Naive thymus-derived CD8-positive, alpha-beta T cell (primary cell): ENCODE measurements at regions of chr14 and their contacts with region 1.

Region 1: DNA sequence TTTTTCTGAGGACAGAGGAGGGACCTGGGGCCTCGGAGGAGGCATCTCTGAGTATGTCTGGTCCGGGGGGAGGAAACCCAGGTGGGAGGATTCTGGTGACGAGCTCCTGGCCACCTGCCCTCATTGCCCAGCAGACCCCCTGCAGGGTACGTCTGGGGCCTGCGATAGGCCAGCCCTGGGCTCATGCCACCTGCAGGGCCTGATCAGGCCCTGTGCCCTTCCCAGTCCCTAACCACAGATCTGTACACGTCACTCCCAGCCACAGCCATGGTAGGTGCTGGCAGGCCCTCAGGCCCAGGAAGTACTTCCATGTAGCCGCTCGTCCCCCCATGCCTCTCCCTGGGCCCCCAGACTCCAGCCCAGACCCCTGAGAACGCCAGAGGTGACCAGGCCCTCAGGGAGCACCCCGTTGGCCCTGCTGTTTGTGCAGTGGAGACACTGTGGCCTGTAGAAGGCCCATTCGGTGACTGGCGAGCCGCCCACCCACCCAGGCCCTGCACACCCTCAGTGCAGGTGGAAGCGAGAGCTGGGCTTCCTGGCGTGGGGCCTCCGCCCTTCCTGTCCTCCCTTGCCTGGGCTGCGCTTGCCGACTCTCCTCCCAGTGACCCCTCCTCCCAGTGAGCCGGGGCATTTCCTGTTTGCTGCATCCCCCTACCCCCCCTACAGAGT is 5.7 kb downstream of the INF2 start:
- DNase-seq: peak in 9 of 10 donors; percentile 37 to 81 (median 54)
- ATAC-seq: peak; percentile 76 to 84
- H3K4me3 Mint-ChIP-seq: peak overlapping the region; percentile 46 to 85 (median 69)
- H3K27ac Mint-ChIP-seq: peak overlapping the region; percentile 93 to 98 (median 95)
- H3K4me1 Mint-ChIP-seq: peaks cover 19 to 50% (median 49%) of the 10 kb centered on the region in 4 donors
- H3K27me3 Mint-ChIP-seq: no peaks in the 10 kb centered on the region

Region 2: DNA sequence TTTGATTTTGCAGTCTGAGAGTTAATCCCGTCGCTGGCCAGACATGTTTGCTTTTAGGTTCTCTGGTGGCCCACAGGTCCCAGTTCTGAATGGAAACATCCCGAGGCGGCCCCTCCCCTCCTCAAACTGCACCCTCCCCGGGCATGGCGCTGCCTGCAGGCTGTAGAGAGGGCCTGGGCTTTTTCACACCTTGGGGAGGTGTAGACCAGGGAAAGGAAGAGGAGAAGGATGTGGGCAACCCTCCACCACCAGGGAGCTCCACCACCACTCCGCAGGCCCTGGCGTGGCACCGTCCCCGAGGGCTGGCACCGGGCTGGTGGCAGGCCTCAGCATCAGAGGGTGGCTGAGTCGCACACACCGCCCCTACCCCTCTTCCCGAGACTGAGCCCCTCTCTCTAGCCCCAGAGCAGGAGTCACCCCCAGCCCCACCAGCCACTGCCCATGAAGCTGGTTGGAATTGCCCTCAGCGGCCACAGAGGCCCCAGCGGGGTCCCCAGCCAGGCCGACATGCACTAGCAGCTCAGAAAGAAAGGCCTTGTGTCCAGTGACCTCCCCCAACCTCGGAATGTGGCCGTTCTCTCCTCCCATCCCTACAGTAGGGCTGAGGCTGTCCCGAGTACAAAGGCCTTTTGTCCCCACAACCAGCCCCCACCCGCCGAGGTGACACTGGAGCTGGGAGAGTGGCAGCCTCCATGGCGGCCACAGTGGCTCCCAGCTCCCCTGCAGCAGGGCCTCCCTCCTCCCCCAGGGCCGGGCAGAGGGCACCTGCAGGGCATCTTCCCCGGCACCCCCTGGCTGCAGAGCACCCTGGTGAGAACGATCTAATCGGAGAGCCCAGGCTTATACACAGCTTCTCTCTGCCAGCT is 29.2 kb before region 1 on chr14:
- POLR2A ChIA-PET with region 1: interaction called, 13 read pairs
- DNase-seq: peak in 8 of 10 donors; percentile 31 to 79 (median 52)
- ATAC-seq: peak; percentile 98
- H3K4me3 Mint-ChIP-seq: peak overlapping the region in 7 of 10 donors; percentile 28 to 68 (median 49)
- H3K27ac Mint-ChIP-seq: peak overlapping the region in 7 of 10 donors; percentile 59 to 90 (median 79)
- H3K4me1 Mint-ChIP-seq: peaks cover 15 to 37% (median 20%) of the 10 kb centered on the region in 4 donors
- H3K27me3 Mint-ChIP-seq: peaks cover 0 to 7% (median 0%) of the 10 kb centered on the region in 5 donors

Region 3: DNA sequence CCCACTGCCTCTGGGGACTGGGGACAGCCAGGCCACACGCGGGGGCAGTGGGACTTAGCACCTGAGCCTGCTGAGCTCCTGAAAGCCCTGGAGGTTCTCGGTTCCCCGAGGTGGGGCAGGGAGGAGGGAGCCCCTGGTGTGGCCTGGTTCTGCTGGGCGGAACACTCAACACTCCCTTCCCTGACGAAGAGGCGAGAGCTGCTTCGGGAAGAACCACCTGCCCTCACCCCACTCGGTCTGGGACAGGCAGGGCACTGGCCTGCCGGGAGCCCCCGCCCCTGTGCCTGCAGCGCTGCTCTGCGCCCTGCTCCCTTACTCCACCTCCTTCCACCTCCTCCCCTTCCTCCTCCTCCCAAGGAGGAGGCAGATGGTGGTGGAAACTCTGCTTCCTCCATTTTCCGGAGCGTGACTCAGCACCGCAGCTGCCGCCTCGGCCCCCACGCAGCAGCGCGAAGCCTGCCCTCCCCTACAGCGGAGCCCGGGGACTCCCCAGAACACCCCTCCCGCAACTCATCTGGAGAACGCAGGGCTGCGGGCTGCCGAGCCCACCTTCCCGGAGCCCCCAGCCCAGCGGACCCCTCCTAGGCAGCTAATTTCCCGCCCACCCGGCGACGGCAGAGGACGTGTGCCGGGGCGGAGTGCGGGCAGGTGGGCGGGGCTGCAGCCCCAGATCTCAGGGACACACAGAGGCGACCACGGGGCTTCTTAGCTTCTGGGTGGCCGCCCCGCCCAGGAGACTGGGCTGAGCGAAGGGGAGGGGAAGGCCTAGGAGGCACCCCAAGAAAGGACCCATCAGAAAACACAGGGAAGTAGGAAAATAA is 17.4 kb before region 1 on chr14:
- POLR2A ChIA-PET with region 1: interaction called, 58 read pairs
- DNase-seq: peak; percentile 31 to 73 (median 54)
- ATAC-seq: peak; percentile 80 to 84
- H3K4me3 Mint-ChIP-seq: peak overlapping the region; percentile 70 to 93 (median 84)
- H3K27ac Mint-ChIP-seq: peak overlapping the region in 9 of 10 donors; percentile 9 to 80 (median 55)
- H3K4me1 Mint-ChIP-seq: peaks cover 9 to 31% (median 15%) of the 10 kb centered on the region in 4 donors
- H3K27me3 Mint-ChIP-seq: no peaks in the 10 kb centered on the region

Region 4: DNA sequence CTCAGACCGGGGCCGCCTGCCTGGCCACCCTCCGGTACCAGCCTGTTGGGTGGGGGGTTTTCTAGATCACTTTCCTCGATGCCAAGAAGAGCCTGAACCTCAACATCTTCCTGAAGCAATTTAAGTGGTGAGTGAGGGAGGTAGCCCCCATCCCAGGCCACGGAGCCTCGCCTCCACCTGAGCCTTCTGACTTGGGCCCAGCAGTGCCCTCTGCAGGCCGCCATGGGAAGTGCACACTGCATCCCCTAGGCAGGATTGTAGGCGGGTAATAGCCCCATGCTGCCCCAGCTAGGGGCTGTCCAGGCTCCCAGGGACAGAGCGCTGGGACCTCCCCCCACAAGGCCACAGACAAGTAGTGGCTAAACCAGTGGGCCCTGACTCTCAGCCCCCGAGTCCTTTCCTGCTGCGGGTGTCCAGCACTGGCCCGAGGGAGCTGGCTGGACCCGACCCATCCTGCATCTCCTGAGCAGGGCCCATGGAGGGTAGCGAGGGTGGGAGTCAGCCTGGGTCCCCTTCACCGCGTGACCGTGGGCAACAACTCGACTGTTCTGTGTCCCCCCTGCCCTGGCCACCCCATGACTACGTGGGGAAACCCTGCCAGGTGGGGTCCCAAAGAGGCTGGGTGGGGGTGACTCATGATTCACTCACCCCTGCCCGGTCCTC is 13.6 kb after region 1 on chr14:
- POLR2A ChIA-PET with region 1: interaction called, 10 read pairs
- DNase-seq: peak; percentile 55 to 82 (median 72)
- ATAC-seq: peak; percentile 90 to 94
- H3K4me3 Mint-ChIP-seq: no peak overlapping the region
- H3K27ac Mint-ChIP-seq: peak overlapping the region in 4 of 10 donors; percentile 14 to 77 (median 32)
- H3K4me1 Mint-ChIP-seq: peaks cover 2 to 6% (median 2%) of the 10 kb centered on the region in 4 donors
- H3K27me3 Mint-ChIP-seq: no peaks in the 10 kb centered on the region

Region 5: GRCh38 chr14:104741803-104742251 is 46.7 kb after region 1 on chr14:
- POLR2A ChIA-PET with region 1: no interaction called
- DNase-seq: peak in 1 of 10 donors; percentile 50
- ATAC-seq: no peak
- H3K4me3 Mint-ChIP-seq: no peak overlapping the region
- H3K27ac Mint-ChIP-seq: no peak overlapping the region
- H3K4me1 Mint-ChIP-seq: peaks cover 0 to 4% (median 0%) of the 10 kb centered on the region in 4 donors
- H3K27me3 Mint-ChIP-seq: no peaks in the 10 kb centered on the region

Region 6: DNA sequence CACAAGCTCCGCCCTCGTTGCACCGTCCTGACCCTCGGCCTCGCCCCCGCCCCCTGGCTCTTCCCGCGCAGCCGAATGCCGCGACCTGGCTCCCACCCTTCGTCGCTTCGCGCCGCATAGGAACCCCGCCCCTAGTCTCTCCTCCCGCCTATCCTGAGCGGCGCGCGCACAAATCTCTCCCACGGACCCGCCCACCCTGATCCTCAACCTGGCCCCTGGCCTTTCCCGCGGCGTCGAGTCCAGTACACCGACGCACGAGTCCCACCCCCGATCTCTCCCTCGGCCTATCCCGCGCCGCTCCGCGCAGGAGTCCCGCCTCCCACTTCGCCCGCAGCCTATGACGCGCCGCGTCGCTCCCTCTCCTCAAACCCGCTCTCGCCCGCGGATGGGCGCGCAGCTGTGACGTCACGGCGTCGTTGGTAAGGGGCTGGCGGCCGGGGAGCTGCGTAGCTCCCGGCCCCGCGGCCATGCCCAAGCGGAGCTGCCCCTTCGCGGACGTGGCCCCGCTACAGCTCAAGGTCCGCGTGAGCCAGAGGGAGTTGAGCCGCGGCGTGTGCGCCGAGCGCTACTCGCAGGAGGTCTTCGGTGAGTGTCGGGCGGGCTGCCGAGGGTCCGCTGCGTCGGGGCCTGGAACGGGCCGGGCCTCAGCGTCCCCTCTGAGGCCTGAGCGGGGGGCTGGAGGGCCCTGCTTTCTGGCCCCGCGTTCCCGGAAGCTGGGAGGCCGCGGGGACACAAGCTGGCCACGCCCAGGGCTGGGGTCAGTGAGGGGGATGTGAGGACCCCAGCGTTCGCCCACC is 57.8 kb after region 1 on chr14 and contains the start of gene SIVA1:
- POLR2A ChIA-PET with region 1: interaction called, 18 read pairs
- DNase-seq: peak; percentile 97 to 100 (median 99)
- ATAC-seq: peak; percentile 89 to 90
- H3K4me3 Mint-ChIP-seq: peak within 1 kb of the TSS; percentile 82 to 96 (median 90)
- H3K27ac Mint-ChIP-seq: peak within 1 kb of the TSS; percentile 75 to 96 (median 95)
- H3K4me1 Mint-ChIP-seq: peaks cover 23 to 55% (median 50%) of the 10 kb centered on the region in 4 donors
- H3K27me3 Mint-ChIP-seq: no peaks in the 10 kb centered on the region
- polyA plus RNA-seq, gene SIVA1: 248 to 297 (median 283) TPM